IMR-90 (cell line): ENCODE measurements at regions of chr22 and their contacts with region 1.

Region 1: GRCh38 chr22:20128902-20129746 is 2.5 kb upstream of the ZDHHC8 start:
- DNase-seq: peak; percentile 23
- ATAC-seq: no peak
- H3K4me3 ChIP-seq: no peak overlapping the region
- H3K27ac ChIP-seq: no peak overlapping the region
- H3K4me1 ChIP-seq: peaks cover 9% of the 10 kb centered on the region
- H3K27me3 ChIP-seq: no peaks in the 10 kb centered on the region
- CTCF ChIP-seq: peak; percentile 45
- POLR2A ChIP-seq: no peak
- RAD21 ChIP-seq: peak; percentile 53

Region 2: GRCh38 chr22:19663286-19663815 is 465.8 kb before region 1 on chr22:
- CTCF ChIA-PET with region 1: no interaction called
- POLR2A ChIA-PET with region 1: no interaction called
- dilution Hi-C with region 1: no loop called
- in situ Hi-C with region 1: no loop called
- intact Hi-C with region 1: no loop called
- DNase-seq: peak; percentile 76
- ATAC-seq: peak; percentile 56
- H3K4me3 ChIP-seq: no peak overlapping the region
- H3K27ac ChIP-seq: no peak overlapping the region
- H3K4me1 ChIP-seq: peaks cover 24% of the 10 kb centered on the region
- H3K27me3 ChIP-seq: no peaks in the 10 kb centered on the region
- CTCF ChIP-seq: no peak
- POLR2A ChIP-seq: no peak
- RAD21 ChIP-seq: no peak

Region 3: DNA sequence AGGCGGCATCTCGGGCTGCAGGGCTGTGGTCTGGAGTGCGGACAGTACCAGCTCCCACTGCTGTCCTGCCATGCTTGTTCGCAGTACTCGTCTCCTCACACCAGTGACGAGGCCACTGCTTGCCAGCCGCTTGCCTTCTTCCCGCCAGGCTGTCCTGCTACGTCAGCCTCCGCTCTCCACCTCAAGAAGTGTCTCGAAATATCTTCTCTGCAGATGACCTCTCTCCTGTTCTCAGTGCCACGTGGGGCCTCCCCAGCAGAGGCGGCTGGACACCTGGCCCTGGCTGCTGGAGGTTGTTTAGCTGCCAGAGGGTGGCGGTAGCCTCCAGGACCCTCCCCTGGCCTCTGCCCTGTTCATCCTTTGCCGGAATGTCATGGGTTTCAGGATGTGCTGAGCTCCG is 24.8 kb after region 1 on chr22:
- CTCF ChIA-PET with region 1: no interaction called
- POLR2A ChIA-PET with region 1: no interaction called
- dilution Hi-C with region 1: no loop called
- in situ Hi-C with region 1: no loop called
- intact Hi-C with region 1: no loop called
- DNase-seq: peak; percentile 20
- ATAC-seq: peak; percentile 27; the same call in 1 of the 2 replicates
- H3K4me3 ChIP-seq: no peak overlapping the region
- H3K27ac ChIP-seq: no peak overlapping the region
- H3K4me1 ChIP-seq: peaks cover 8% of the 10 kb centered on the region
- H3K27me3 ChIP-seq: peaks cover 4% of the 10 kb centered on the region; the same call in 1 of the 2 replicates
- CTCF ChIP-seq: no peak
- POLR2A ChIP-seq: no peak
- RAD21 ChIP-seq: no peak

Region 4: DNA sequence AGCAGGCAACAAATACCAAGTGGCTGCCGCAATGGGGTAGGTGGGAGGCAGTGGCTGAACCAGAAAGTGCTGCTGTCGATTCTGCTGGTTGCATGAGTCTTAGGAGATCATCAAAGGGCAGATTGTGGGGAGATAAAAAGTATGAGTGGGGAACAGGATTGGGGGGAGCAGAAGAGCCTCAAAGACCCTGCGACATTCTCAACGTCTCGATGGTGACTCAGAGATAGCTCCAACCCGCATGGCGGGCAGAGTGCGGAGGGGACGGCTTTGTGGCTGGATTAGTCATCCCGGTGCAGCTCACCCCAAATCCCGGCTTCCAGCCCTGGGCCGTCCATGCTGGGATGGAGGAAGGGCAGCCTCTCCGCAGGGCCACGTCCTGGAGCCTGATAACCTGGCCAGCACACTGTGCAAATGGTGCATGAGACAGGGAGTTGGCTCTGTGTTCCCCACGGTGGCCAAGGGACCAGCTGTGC is 150.6 kb after region 1 on chr22:
- CTCF ChIA-PET with region 1: no interaction called
- POLR2A ChIA-PET with region 1: interaction called, 14 read pairs
- dilution Hi-C with region 1: no loop called
- in situ Hi-C with region 1: no loop called
- intact Hi-C with region 1: no loop called
- DNase-seq: peak; percentile 54
- ATAC-seq: peak; percentile 72
- H3K4me3 ChIP-seq: no peak overlapping the region
- H3K27ac ChIP-seq: no peak overlapping the region
- H3K4me1 ChIP-seq: no peaks in the 10 kb centered on the region
- H3K27me3 ChIP-seq: peaks cover 14% of the 10 kb centered on the region
- CTCF ChIP-seq: no peak
- POLR2A ChIP-seq: no peak
- RAD21 ChIP-seq: no peak

Region 5: DNA sequence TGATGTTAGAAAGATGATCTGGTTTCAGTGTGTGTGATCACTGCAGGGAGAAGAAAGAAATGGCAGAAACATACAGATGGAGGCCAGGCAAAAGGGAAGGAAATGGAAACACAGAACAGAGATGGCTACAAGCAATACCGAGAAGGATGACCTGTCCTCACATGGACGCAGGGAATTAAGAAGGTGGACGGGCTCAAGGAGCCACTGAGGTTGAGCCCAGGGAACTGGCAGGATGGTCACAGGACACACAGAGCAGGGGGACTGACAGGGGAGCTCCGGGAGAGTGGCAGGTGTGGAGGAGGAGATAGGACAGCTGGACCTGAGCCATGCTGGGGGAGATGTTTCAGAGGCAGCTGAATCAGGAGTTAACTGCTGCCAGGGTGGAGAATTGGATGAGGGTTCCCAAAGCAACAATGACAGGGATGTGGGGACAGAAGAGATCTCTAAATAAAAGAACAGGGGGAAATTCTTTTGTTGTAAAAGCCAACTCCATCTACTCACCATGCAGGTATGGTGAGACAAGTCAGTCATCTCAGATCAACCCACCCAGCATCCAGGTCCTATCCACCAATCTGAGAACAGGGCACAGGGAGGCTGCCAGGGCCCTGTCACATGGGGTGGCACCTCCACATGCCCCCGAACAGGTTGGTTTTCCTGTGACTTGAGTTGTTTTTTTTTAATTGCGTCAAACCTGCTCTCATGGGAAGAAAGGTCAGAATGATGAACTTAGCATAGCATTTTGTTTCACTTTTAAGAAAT is 340.2 kb after region 1 on chr22:
- CTCF ChIA-PET with region 1: no interaction called
- POLR2A ChIA-PET with region 1: no interaction called
- dilution Hi-C with region 1: no loop called
- in situ Hi-C with region 1: no loop called
- intact Hi-C with region 1: no loop called
- DNase-seq: no peak
- ATAC-seq: no peak
- H3K4me3 ChIP-seq: no peak overlapping the region
- H3K27ac ChIP-seq: no peak overlapping the region
- H3K4me1 ChIP-seq: no peaks in the 10 kb centered on the region
- H3K27me3 ChIP-seq: no peaks in the 10 kb centered on the region
- CTCF ChIP-seq: no peak
- POLR2A ChIP-seq: no peak
- RAD21 ChIP-seq: no peak